ENCODE measurements at regions of chr11 and their contacts with region 1.

Region 1: GRCh38 chr11:93063100-93063499 is 93.6 kb downstream of the MTNR1B start:
- DNase-seq: peak; percentile 4
- H3K4me3 ChIP-seq: no peak overlapping the region
- H3K27ac ChIP-seq: no peak overlapping the region
- H3K4me1 ChIP-seq: peaks cover 5% of the 10 kb centered on the region
- H3K27me3 ChIP-seq: no peaks in the 10 kb centered on the region
- CTCF ChIP-seq: no peak

Region 2: DNA sequence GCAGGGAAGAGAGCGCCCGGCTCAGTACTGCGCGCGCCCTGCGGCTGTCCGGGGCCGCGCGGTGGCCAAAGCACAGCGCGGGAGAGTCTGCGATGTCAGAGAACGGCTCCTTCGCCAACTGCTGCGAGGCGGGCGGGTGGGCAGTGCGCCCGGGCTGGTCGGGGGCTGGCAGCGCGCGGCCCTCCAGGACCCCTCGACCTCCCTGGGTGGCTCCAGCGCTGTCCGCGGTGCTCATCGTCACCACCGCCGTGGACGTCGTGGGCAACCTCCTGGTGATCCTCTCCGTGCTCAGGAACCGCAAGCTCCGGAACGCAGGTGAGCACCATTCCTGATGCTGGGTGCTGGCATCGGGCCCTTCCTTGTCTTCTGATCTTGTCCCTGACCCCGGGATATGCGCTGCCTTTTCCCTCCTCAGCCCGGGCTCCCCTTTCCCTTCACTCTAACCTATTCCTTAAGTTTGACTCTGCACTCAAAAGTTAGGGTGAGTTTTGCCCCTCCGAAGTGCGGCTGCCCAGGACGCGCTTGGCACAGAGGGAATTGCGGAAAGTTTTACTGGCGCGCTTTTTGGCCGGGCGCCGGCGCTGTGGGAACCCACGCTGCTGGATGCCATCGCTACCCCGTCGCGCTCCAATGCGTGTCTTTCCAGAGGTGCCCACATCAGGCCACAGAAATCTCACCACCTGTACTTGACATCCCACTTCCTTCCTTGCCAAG is 93.3 kb before region 1 on chr11 and contains the start of gene MTNR1B:
- CTCF ChIA-PET with region 1: no interaction called
- dilution Hi-C with region 1: no loop called
- in situ Hi-C with region 1: no loop called
- intact Hi-C with region 1: loop called (anchors 5 kb)
- DNase-seq: no peak
- H3K4me3 ChIP-seq: peak within 1 kb of the TSS; percentile 14 to 41 (median 40)
- H3K27ac ChIP-seq: no peak within 1 kb of the TSS
- H3K4me1 ChIP-seq: peaks cover 14% of the 10 kb centered on the region
- H3K27me3 ChIP-seq: peaks cover 3% of the 10 kb centered on the region
- CTCF ChIP-seq: no peak
- total RNA-seq, gene MTNR1B: not detected

Region 3: GRCh38 chr11:93039531-93040240 is 23.4 kb before region 1 on chr11:
- CTCF ChIA-PET with region 1: no interaction called
- dilution Hi-C with region 1: no loop called
- in situ Hi-C with region 1: no loop called
- intact Hi-C with region 1: no loop called
- DNase-seq: peak; percentile 41
- H3K4me3 ChIP-seq: no peak overlapping the region
- H3K27ac ChIP-seq: no peak overlapping the region
- H3K4me1 ChIP-seq: peaks cover 9% of the 10 kb centered on the region
- H3K27me3 ChIP-seq: no peaks in the 10 kb centered on the region
- CTCF ChIP-seq: no peak